Posterior vena cava (tissue), 2 donors: ENCODE measurements at regions of chr3 and their contacts with region 1.

Region 1: GRCh38 chr3:42749753-42750231 is 23.3 kb downstream of the CCDC13 start:
- DNase-seq: no peak

Region 2: DNA sequence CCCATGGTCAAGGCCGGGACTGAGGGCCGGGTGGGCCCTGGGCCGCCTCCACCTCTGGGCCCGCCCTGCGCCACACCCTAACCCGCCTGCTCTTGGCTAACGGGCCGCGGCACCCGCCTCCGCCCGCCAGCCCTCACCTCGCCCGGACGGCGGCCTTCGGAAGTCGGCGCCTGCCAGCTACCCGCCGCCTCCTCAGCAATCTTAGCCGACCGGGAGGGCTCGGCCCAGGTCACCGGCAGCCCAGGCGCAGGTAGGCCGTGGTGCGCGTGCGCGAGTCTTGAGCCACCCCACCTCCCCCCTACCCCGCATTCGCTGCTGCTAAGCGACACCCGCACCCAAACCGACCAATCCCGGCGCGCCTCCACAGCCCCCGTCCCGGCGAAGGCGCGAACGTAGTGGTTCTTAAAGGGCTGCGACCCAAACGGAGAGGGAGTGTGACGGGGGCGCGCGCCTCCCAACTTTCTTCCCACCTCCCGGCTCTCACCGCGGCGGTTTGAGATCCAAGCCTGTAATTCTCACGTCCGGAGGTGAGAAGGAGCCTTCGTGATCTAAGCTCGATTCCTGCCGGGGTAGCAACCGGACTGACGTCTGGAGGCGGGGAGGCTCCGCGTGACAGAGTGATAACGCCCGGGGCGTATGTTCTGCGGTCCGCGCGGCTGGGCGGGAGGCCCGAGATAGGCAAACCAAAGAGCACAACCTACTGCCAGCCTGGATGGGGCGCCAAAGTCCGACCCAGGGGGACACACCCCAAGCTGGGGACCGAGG is 167.9 kb before region 1 on chr3 and contains the start of gene SEC22C:
- intact Hi-C with region 1: loop called in 1 of 2 experiments (anchors 10 kb)
- DNase-seq: peak; percentile 98
- total RNA-seq, gene SEC22C: 43.8 to 47.0 TPM

Region 3: GRCh38 chr3:42729404-42730145 is 20.2 kb before region 1 on chr3:
- intact Hi-C with region 1: loop called in 1 of 2 experiments (anchors 1 kb)
- DNase-seq: no peak